HCT116 (cell line): ENCODE measurements at regions of chr1 and their contacts with region 1.

Region 1: GRCh38 chr1:27392096-27392777 is at the start of gene GPR3:
- DNase-seq: peak; percentile 84
- ATAC-seq: peak; percentile 81
- H3K4me3 ChIP-seq: peak within 1 kb of the TSS; percentile 96 to 99
- H3K27ac ChIP-seq: peak within 1 kb of the TSS; percentile 88
- H3K4me1 ChIP-seq: peaks cover 17 to 43% of the 10 kb centered on the region in 2 experiments
- H3K27me3 ChIP-seq: no peaks in the 10 kb centered on the region
- CTCF ChIP-seq: peak; percentile 42 to 70 (median 43); a peak in 5 of 6 replicates
- POLR2A ChIP-seq: no peak
- RAD21 ChIP-seq: peak; percentile 49
- total RNA-seq, gene GPR3: 2.8 TPM

Region 2: GRCh38 chr1:27300341-27301051 is 91.7 kb before region 1 on chr1:
- CTCF ChIA-PET with region 1: interaction called, 65 read pairs
- POLR2A ChIA-PET with region 1: interaction called, 4 read pairs
- RAD21 ChIA-PET with region 1: interaction called, 5 to 6 read pairs
- intact Hi-C with region 1: loop called (anchors 1 kb)
- DNase-seq: peak; percentile 69
- ATAC-seq: peak; percentile 94
- H3K4me3 ChIP-seq: no peak overlapping the region
- H3K27ac ChIP-seq: no peak overlapping the region
- H3K4me1 ChIP-seq: peaks cover 0 to 7% of the 10 kb centered on the region in 2 experiments; a peak in 2 of 4 replicates
- H3K27me3 ChIP-seq: no peaks in the 10 kb centered on the region
- CTCF ChIP-seq: peak; percentile 91 to 93 (median 93)
- POLR2A ChIP-seq: no peak
- RAD21 ChIP-seq: peak; percentile 99

Region 3: GRCh38 chr1:27332536-27333281 is 59.5 kb before region 1 on chr1:
- CTCF ChIA-PET with region 1: interaction called, 10 read pairs
- POLR2A ChIA-PET with region 1: no interaction called
- RAD21 ChIA-PET with region 1: interaction called in 1 of 2 experiments, 5 read pairs
- intact Hi-C with region 1: no loop called
- DNase-seq: no peak
- ATAC-seq: peak; percentile 89
- H3K4me3 ChIP-seq: no peak overlapping the region
- H3K27ac ChIP-seq: no peak overlapping the region; the same call in 1 of the 2 replicates
- H3K4me1 ChIP-seq: no peaks in the 10 kb centered on the region
- H3K27me3 ChIP-seq: no peaks in the 10 kb centered on the region
- CTCF ChIP-seq: peak; percentile 66 to 92 (median 92); a peak in 5 of 6 replicates
- POLR2A ChIP-seq: no peak
- RAD21 ChIP-seq: peak; percentile 68

Region 4: GRCh38 chr1:27357281-27358037 is 34.8 kb before region 1 on chr1:
- CTCF ChIA-PET with region 1: interaction called, 7 read pairs
- POLR2A ChIA-PET with region 1: no interaction called
- RAD21 ChIA-PET with region 1: interaction called, 3 read pairs
- intact Hi-C with region 1: loop called (anchors 1 kb)
- DNase-seq: no peak
- ATAC-seq: peak; percentile 87
- H3K4me3 ChIP-seq: no peak overlapping the region
- H3K27ac ChIP-seq: peak overlapping the region; percentile 39; the same call in 1 of the 2 replicates
- H3K4me1 ChIP-seq: peaks cover 7 to 11% of the 10 kb centered on the region in 2 experiments; a peak in 3 of 4 replicates
- H3K27me3 ChIP-seq: no peaks in the 10 kb centered on the region
- CTCF ChIP-seq: peak; percentile 80 to 94 (median 85)
- POLR2A ChIP-seq: no peak
- RAD21 ChIP-seq: no peak; the same call in none of the 2 replicates

Region 5: DNA sequence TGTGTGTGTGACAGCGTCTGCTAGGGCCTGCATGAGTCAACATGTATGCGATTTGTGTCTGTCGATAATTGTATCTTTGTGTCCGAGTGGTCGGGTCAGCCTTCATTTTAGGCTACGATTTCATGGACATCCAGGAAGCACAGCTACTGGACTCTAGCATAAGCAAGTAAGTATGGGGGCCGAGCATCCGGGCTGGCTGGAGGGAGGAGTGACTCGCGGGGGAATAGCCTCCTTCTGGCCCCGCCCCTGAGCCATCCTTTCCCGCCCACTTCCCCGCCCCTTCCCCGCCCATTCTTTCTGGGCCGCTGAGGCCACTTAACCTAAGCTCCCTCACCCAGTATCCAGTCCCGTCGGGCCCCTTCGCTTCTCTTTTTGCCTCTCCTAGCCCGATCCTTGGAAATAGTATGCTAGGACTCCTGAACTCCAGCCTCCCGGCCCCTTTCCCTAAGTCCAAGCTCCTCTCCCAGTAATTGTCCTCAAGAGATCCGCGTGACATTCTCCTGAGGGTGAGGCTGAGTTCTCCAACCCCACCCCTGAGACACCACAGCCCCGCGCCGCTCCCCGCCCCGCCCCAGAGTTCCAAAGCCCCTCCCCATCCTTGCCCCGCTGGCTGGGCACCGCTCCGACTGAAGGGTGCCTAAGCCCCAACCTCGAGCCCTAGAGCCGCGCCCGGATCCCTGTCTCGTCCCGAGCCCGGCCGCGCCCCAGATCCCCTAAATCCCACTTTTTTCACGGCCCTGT is 26.7 kb before region 1 on chr1:
- CTCF ChIA-PET with region 1: interaction called, 28 read pairs
- POLR2A ChIA-PET with region 1: interaction called, 5 read pairs
- RAD21 ChIA-PET with region 1: interaction called in 1 of 2 experiments, 3 read pairs
- intact Hi-C with region 1: no loop called
- DNase-seq: peak; percentile 73
- ATAC-seq: peak; percentile 75
- H3K4me3 ChIP-seq: peak overlapping the region; percentile 67 to 69
- H3K27ac ChIP-seq: peak overlapping the region; percentile 100
- H3K4me1 ChIP-seq: peaks cover 12 to 32% of the 10 kb centered on the region in 2 experiments
- H3K27me3 ChIP-seq: no peaks in the 10 kb centered on the region
- CTCF ChIP-seq: no peak
- POLR2A ChIP-seq: peak; percentile 25
- RAD21 ChIP-seq: no peak

Region 6: GRCh38 chr1:27603681-27604578 is 211.7 kb after region 1 on chr1 and contains the start of gene AHDC1:
- CTCF ChIA-PET with region 1: interaction called, 21 read pairs
- POLR2A ChIA-PET with region 1: interaction called, 5 read pairs
- RAD21 ChIA-PET with region 1: no interaction called
- intact Hi-C with region 1: loop called (anchors 2 kb)
- DNase-seq: peak; percentile 65
- ATAC-seq: peak; percentile 74
- H3K4me3 ChIP-seq: peak within 1 kb of the TSS; percentile 85 to 95
- H3K27ac ChIP-seq: peak within 1 kb of the TSS; percentile 68
- H3K4me1 ChIP-seq: peaks cover 40 to 70% of the 10 kb centered on the region in 2 experiments
- H3K27me3 ChIP-seq: no peaks in the 10 kb centered on the region
- CTCF ChIP-seq: no peak
- POLR2A ChIP-seq: peak; percentile 34
- RAD21 ChIP-seq: no peak
- total RNA-seq, gene AHDC1: 33.7 TPM